ENCODE measurements at regions of chr11 and their contacts with region 1.

Region 1: DNA sequence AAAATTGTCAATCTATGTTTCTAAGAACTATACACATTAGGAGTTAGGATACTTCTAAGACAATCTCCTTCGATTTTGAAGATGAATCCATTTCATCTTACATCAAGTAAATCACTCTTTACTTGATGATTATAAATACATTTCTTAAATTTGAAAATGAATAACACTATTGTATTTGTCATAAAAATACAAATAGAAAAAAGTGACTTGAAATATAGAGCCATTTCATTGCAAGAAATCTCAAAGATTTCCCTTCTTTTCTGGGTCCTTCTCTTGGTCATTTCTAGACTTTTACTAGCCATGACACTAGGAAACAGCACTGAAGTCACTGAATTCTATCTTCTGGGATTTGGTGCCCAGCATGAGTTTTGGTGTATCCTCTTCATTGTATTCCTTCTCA is at the start of gene OR5AK2:
- DNase-seq: no peak
- ATAC-seq: no peak
- H3K4me3 ChIP-seq: no peak within 1 kb of the TSS
- H3K27ac ChIP-seq: no peak within 1 kb of the TSS
- H3K4me1 ChIP-seq: no peaks in the 10 kb centered on the region
- H3K27me3 ChIP-seq: no peaks in the 10 kb centered on the region
- CTCF ChIP-seq: no peak
- EP300 ChIP-seq: no peak
- POLR2A ChIP-seq: no peak
- RAD21 ChIP-seq: no peak
- polyA plus RNA-seq, gene OR5AK2: not detected

Region 2: DNA sequence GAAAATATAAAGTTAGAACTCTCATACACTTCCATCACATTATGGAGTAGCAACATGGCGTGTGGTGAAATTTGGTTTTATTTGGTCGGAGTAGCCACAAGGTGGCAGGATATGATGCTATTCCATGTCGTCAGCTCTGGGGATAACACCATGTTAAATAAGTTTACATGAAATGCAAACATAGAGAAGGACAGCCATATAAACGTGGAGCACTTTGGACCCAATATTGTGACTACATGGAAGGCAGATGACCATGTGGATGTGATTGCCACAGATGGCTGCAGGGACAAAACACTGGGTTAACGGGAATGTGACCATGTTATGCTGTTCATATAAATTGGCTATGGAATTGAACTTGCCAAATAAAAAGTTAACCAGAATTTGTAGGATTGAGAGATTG is 466.6 kb before region 1 on chr11:
- CTCF ChIA-PET with region 1: no interaction called
- POLR2A ChIA-PET with region 1: no interaction called
- RAD21 ChIA-PET with region 1: no interaction called
- SMC1A ChIA-PET with region 1: no interaction called
- in situ Hi-C with region 1: no loop called
- intact Hi-C with region 1: no loop called
- DNase-seq: no peak
- ATAC-seq: 0 out of 3 replicates have a peak, but pooled peaks have one; percentile 45
- H3K4me3 ChIP-seq: no peak overlapping the region
- H3K27ac ChIP-seq: no peak overlapping the region
- H3K4me1 ChIP-seq: no peaks in the 10 kb centered on the region
- H3K27me3 ChIP-seq: no peaks in the 10 kb centered on the region
- CTCF ChIP-seq: peak in 1 of 3 experiments; percentile 33; a peak in 2 of 6 replicates
- EP300 ChIP-seq: no peak
- POLR2A ChIP-seq: no peak
- RAD21 ChIP-seq: no peak

Region 3: GRCh38 chr11:56855217-56855616 is 133.4 kb before region 1 on chr11:
- CTCF ChIA-PET with region 1: no interaction called
- POLR2A ChIA-PET with region 1: no interaction called
- RAD21 ChIA-PET with region 1: no interaction called
- SMC1A ChIA-PET with region 1: no interaction called
- in situ Hi-C with region 1: no loop called
- intact Hi-C with region 1: loop called (anchors 10 kb)
- DNase-seq: no peak
- ATAC-seq: no peak
- H3K4me3 ChIP-seq: no peak overlapping the region
- H3K27ac ChIP-seq: no peak overlapping the region
- H3K4me1 ChIP-seq: no peaks in the 10 kb centered on the region
- H3K27me3 ChIP-seq: no peaks in the 10 kb centered on the region
- CTCF ChIP-seq: no peak
- EP300 ChIP-seq: no peak
- POLR2A ChIP-seq: no peak
- RAD21 ChIP-seq: no peak

Region 4: DNA sequence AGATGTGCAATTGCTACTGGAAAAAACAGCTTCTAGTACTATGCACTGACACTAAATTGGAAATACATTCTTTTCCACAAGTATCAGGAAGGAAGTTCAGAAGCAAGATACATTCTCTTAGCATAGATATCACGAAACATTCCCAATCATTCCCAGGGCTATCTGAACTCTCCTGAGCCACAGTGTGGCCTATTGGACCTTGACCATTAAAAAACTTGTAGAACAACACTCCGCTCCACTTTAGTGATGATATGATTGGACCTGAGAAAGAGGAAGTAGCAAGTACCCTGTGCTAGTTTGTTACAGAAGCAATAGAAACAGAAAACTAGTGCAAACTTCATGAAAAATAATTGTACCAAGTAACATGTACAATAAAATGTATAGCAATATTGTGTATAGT is 11.3 kb before region 1 on chr11:
- CTCF ChIA-PET with region 1: no interaction called
- POLR2A ChIA-PET with region 1: no interaction called
- RAD21 ChIA-PET with region 1: no interaction called
- SMC1A ChIA-PET with region 1: no interaction called
- in situ Hi-C with region 1: no loop called
- intact Hi-C with region 1: no loop called
- DNase-seq: no peak
- ATAC-seq: no peak
- H3K4me3 ChIP-seq: no peak overlapping the region
- H3K27ac ChIP-seq: no peak overlapping the region
- H3K4me1 ChIP-seq: no peaks in the 10 kb centered on the region
- H3K27me3 ChIP-seq: no peaks in the 10 kb centered on the region
- CTCF ChIP-seq: no peak
- EP300 ChIP-seq: no peak
- POLR2A ChIP-seq: no peak
- RAD21 ChIP-seq: no peak

Region 5: GRCh38 chr11:57144075-57144474 is 155.5 kb after region 1 on chr11:
- CTCF ChIA-PET with region 1: no interaction called
- POLR2A ChIA-PET with region 1: no interaction called
- RAD21 ChIA-PET with region 1: no interaction called
- SMC1A ChIA-PET with region 1: no interaction called
- in situ Hi-C with region 1: no loop called
- intact Hi-C with region 1: no loop called
- DNase-seq: no peak
- ATAC-seq: no peak
- H3K4me3 ChIP-seq: no peak overlapping the region
- H3K27ac ChIP-seq: no peak overlapping the region
- H3K4me1 ChIP-seq: no peaks in the 10 kb centered on the region
- H3K27me3 ChIP-seq: peaks cover 0 to 2% of the 10 kb centered on the region in 2 experiments
- CTCF ChIP-seq: no peak
- EP300 ChIP-seq: no peak
- POLR2A ChIP-seq: no peak
- RAD21 ChIP-seq: no peak

Region 6: GRCh38 chr11:57155400-57155799 is 166.8 kb after region 1 on chr11:
- CTCF ChIA-PET with region 1: no interaction called
- POLR2A ChIA-PET with region 1: no interaction called
- RAD21 ChIA-PET with region 1: no interaction called
- SMC1A ChIA-PET with region 1: no interaction called
- in situ Hi-C with region 1: no loop called
- intact Hi-C with region 1: no loop called
- DNase-seq: no peak
- ATAC-seq: no peak
- H3K4me3 ChIP-seq: no peak overlapping the region
- H3K27ac ChIP-seq: no peak overlapping the region
- H3K4me1 ChIP-seq: no peaks in the 10 kb centered on the region
- H3K27me3 ChIP-seq: peaks cover 0 to 2% of the 10 kb centered on the region in 2 experiments; a peak in 1 of 4 replicates
- CTCF ChIP-seq: no peak
- EP300 ChIP-seq: no peak
- POLR2A ChIP-seq: no peak
- RAD21 ChIP-seq: no peak

Measured in GM12878 (cell line).